ENCODE measurements at regions of chr15 and their contacts with region 1.

Region 1: GRCh38 chr15:47717036-47717611 is at the start of gene SEMA6D:
- DNase-seq: no peak
- H3K4me3 Mint-ChIP-seq: no peak within 1 kb of the TSS
- H3K27ac Mint-ChIP-seq: no peak within 1 kb of the TSS
- H3K4me1 Mint-ChIP-seq: no peaks in the 10 kb centered on the region
- H3K27me3 Mint-ChIP-seq: peaks cover 52% of the 10 kb centered on the region
- total RNA-seq, gene SEMA6D: not detected in 2 replicates

Region 2: DNA sequence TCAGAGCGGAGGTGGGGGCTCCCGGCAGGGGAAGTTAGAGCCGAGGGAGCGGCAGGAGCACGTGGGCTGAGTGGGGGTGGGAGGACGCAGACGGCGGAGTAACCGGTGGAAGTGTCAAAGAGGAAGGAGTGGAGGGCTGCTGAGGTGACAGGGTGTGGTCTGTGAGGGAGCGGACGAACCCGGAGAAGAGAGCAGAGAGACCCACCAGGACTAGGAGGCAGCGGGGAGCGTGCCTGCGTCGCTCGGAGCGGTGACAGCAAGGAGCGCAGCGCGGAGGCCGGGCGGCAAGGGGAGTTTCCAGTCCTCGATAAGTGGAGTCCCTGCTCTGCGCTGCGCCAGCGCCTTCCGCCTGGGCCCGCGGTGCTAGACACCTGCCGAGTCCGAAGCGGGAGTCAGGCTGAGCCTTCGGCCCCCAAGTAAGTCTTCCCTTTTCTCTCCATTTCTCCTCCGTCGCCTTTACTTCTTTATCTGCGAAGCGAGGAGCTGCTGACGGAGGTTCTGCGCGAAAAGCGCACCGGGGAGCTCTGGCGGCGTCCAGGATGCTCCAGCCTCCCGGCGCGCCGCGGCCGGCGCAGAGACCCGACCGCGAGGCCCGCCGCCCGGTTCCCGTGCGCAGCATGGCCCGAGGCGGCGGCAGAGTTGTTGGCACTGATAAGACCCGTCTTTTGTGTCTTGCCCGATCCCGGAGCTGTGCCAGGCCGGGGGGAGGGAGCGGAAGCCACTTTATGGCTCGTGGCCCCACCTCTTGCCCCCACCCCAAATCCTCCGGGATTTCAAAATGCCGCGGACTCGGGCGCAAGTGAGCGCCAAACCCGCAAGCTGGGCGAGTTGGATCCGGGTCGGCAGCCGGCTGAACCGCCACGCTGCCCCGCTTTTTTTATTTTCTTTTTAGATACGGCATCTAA is 532.9 kb before region 1 on chr15:
- intact Hi-C with region 1: loop called (anchors 10 kb)
- DNase-seq: no peak
- H3K4me3 Mint-ChIP-seq: peak overlapping the region; percentile 57
- H3K27ac Mint-ChIP-seq: no peak overlapping the region
- H3K4me1 Mint-ChIP-seq: no peaks in the 10 kb centered on the region
- H3K27me3 Mint-ChIP-seq: peaks cover 25% of the 10 kb centered on the region

Region 3: GRCh38 chr15:48285329-48286214 is 568.4 kb after region 1 on chr15:
- intact Hi-C with region 1: loop called (anchors 10 kb)
- DNase-seq: peak; percentile 19
- H3K4me3 Mint-ChIP-seq: no peak overlapping the region
- H3K27ac Mint-ChIP-seq: no peak overlapping the region
- H3K4me1 Mint-ChIP-seq: peaks cover 7% of the 10 kb centered on the region
- H3K27me3 Mint-ChIP-seq: peaks cover 6% of the 10 kb centered on the region

Measured in activated T-helper 1 cell treated with anti-CD3 and anti-CD28 coated beads, Interleukin-12 subunit alpha, Interleukin-12 subunit beta, Interleukin-2, Interleukin-4 antibody, amounts not matched to agents 30 ng/mL and 10 ng/mL and 1 ng/mL, durations not matched to agents 14 hours and 24 hours and 36 hours (primary cell).